Activated CD4-positive, alpha-beta T cell treated with anti-CD3 and anti-CD28 coated beads, Interleukin-2, amount 10 ng/mL, durations not matched to agents 24 days and 14 days (primary cell): ENCODE measurements at regions of chr3 and their contacts with region 1.

Region 1: GRCh38 chr3:197298341-197298857 is at the start of gene DLG1:
- DNase-seq: peak; percentile 91
- H3K4me3 Mint-ChIP-seq: peak within 1 kb of the TSS; percentile 97
- H3K27ac Mint-ChIP-seq: peak within 1 kb of the TSS; percentile 98
- H3K4me1 Mint-ChIP-seq: peaks cover 24% of the 10 kb centered on the region
- H3K27me3 Mint-ChIP-seq: peaks cover 29% of the 10 kb centered on the region
- total RNA-seq, gene DLG1: 81.1 and 84.1 TPM in 2 replicates

Region 2: DNA sequence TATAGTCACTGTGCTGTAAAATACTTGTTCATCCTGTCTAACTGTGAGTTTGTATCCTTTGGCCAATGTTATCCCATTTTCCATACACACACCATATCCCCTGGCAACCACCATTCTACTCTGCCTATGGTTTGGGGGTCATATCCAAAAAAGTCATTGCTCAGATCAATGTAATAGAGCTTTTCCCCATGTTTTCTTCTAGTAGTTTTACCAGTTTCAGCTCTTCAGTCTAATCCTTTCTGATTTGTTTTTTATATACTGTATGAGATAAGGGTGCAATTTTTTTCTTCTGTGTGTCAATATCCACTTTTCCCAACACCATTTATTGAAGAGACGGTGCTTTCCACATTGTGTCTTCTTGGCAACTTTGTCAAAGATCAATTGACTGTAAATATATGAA is 14.0 kb after region 1 on chr3:
- intact Hi-C with region 1: no loop called
- DNase-seq: no peak
- H3K4me3 Mint-ChIP-seq: no peak overlapping the region
- H3K27ac Mint-ChIP-seq: no peak overlapping the region
- H3K4me1 Mint-ChIP-seq: peaks cover 27% of the 10 kb centered on the region
- H3K27me3 Mint-ChIP-seq: peaks cover 19% of the 10 kb centered on the region

Region 3: GRCh38 chr3:197380786-197381185 is 82.4 kb after region 1 on chr3:
- intact Hi-C with region 1: no loop called
- DNase-seq: no peak
- H3K4me3 Mint-ChIP-seq: no peak overlapping the region
- H3K27ac Mint-ChIP-seq: no peak overlapping the region
- H3K4me1 Mint-ChIP-seq: no peaks in the 10 kb centered on the region
- H3K27me3 Mint-ChIP-seq: peaks cover 4% of the 10 kb centered on the region

Region 4: GRCh38 chr3:197394464-197395321 is 96.3 kb after region 1 on chr3:
- intact Hi-C with region 1: no loop called
- DNase-seq: peak; percentile 83
- H3K4me3 Mint-ChIP-seq: no peak overlapping the region
- H3K27ac Mint-ChIP-seq: peak overlapping the region; percentile 76
- H3K4me1 Mint-ChIP-seq: peaks cover 27% of the 10 kb centered on the region
- H3K27me3 Mint-ChIP-seq: no peaks in the 10 kb centered on the region

Region 5: DNA sequence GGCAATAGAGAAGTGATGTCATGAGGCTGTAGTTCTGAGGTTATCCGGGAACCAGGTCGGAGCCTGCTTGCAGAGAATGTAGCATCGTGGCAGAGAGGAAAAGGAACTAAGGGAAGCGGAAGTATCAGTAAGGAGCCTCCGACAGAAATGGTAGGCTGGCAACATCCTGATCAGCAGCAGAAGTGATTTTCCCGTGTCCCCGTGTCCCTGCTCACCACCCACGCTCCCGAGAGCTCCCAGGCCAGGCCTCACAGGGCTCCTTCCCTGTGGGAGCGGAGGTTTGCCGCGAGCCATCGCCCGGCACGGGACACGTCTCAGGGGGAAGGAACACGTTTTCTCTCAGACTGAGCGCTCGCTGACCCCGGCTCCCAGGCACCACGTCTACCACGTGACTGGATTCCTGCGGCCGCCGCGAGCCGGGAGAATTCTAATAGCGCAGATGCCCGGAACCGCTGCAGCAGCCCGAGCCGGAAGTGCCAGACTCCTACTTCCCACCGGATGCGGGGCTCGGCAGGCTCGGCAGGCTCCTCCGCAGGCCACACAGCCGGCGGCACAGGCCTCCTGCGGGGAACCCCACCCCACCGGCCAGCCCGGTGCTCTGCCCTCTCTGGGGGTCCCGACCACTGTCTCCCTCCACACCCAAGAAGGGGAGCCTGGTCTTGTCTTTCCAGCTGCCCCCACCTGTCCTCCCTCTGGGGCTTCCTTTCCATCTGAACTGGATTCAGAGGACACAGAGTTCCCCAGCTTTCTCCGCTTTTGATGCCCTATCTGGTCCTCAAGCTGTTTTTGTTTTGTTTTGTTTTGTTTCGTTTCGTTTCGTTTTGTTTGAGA is 158.1 kb after region 1 on chr3:
- intact Hi-C with region 1: loop called (anchors 5 kb)
- DNase-seq: peak; percentile 83
- H3K4me3 Mint-ChIP-seq: peak overlapping the region; percentile 85
- H3K27ac Mint-ChIP-seq: peak overlapping the region; percentile 88
- H3K4me1 Mint-ChIP-seq: peaks cover 18% of the 10 kb centered on the region
- H3K27me3 Mint-ChIP-seq: peaks cover 21% of the 10 kb centered on the region

Region 6: GRCh38 chr3:197564097-197564843 is 265.9 kb after region 1 on chr3:
- intact Hi-C with region 1: no loop called
- DNase-seq: no peak
- H3K4me3 Mint-ChIP-seq: no peak overlapping the region
- H3K27ac Mint-ChIP-seq: no peak overlapping the region
- H3K4me1 Mint-ChIP-seq: peaks cover 8% of the 10 kb centered on the region
- H3K27me3 Mint-ChIP-seq: peaks cover 19% of the 10 kb centered on the region